ENCODE measurements at regions of chr15 and their contacts with region 1.

Region 1: DNA sequence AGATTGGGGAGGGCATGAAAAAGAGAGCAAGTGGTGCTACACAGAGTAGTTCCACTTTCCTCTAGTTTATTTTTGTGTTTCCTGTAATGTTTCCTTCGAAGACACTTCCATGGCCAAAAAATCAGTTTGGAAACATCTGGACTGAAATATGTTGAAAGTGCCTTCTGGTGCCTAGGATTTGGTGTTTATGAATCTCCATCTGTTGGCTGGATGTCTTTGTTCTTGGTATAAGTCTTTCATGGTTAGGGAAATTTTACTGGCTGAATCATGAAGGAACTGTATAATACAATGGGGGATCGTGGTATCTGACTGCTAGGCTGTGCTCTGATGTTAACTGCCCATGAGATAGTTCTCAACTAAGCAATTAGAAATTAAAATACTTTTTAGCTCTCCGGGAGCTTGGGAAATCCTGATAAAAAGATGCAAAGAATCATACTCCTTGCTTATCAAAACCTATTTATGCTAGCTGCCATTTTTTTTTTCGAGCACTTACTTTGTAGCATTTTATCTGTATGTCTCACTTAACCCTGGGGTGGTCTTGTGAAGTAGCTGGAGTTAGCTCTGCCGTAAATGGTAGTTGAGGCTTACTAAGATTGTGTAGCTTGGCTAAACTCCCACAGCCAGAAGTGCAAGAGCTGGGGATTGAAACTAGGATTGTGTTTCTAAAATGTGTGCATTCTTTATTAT is 21.9 kb downstream of the AKAP13 start:
- DNase-seq: no peak
- ATAC-seq: peak; percentile 37

Region 2: GRCh38 chr15:85337425-85338074 is 64.8 kb before region 1 on chr15:
- intact Hi-C with region 1: no loop called
- DNase-seq: no peak
- ATAC-seq: peak; percentile 14

Region 3: GRCh38 chr15:85381850-85382751 is 20.2 kb before region 1 on chr15:
- intact Hi-C with region 1: no loop called
- DNase-seq: no peak
- ATAC-seq: no peak

Region 4: DNA sequence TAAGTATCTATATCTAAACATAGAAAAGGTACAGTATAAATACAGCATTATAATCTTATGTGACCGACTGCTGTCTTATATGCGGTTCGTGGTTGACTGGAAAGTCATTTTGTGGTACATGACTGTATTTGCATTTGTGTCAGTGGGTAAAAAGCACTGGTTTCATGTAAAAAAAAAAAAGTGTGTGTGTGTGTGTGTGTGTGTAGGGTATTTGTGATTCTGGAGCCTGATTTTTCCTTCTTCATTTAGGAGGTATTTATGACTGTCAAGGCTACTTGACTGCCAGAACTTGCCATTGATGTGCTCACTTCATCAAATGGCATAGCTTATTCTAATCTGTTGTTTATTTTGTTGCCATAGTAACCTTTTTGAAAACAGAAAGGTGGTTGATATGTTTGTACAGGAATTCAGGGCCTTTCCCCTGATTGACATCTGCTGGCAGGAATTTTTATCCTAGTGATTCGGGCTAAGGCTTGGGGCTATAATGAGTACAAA is 41.3 kb after region 1 on chr15:
- intact Hi-C with region 1: loop called (anchors 5 kb)
- DNase-seq: no peak
- ATAC-seq: peak; percentile 49

Region 5: DNA sequence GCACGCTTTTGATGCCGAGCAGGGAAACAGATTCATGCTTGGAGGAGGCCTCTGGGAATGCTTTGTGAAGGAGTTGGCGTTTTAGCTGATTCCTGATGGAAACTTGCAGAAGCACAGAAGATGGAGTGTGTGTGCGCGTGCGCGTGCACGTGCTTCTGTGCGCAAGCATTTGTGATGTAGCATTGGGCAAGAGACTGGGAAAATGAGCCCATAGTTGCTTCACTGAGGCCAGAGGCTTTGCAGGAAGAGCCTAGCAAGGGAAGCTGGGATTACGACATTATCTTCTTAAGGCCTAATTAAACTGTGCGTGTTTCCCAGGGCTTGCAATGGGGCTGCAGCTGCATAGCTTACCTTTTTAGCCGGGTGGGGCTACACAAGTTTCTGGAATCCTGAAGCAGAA is 659.2 kb after region 1 on chr15:
- intact Hi-C with region 1: no loop called
- DNase-seq: no peak
- ATAC-seq: no peak

Measured in Right ventricle myocardium inferior (tissue), 1 donor.